ENCODE measurements at regions of chr9 and their contacts with region 1.

Region 1: DNA sequence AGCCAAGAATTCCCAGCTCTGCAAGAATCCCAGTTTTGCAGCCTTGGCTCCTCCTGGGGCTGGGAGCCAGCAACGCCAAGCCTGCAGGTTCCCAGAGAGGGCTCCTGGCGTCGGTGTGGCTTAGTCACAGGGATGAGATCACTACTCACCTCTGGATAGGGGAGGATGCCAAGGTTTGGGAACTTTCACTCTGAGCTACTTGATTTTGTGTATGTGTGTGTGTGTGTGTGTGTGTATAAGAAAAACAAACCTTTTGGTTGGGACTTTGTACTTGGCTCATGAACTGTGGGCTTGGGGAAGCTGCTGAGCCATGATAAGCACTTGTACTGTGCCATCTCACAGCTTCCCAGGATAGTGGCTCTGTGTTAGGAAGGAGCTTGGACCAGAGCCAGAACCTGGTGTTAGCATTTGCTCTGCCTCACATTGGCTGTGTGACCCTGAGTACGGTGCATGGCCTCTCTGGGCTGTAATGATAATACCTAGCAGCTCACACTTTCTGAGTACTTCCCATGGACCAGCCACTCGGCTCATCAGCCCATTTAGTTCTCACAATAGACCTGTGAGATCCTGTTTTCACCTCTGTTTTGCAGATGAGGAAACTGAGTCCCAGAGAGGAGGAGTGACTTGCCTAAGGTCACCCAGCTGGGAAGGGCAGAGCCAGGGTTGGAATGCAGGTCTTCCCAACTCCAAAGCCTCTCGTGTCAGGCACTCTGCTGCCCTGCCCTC is 41.4 kb upstream of the DAB2IP start:
- DNase-seq: no peak
- H3K4me3 ChIP-seq: no peak overlapping the region
- H3K27ac ChIP-seq: no peak overlapping the region
- H3K4me1 ChIP-seq: peaks cover 0 to 10% (median 5%) of the 10 kb centered on the region in 4 experiments; a peak in 5 of 7 replicates
- H3K27me3 ChIP-seq: no peaks in the 10 kb centered on the region
- CTCF ChIP-seq: no peak
- EP300 ChIP-seq: no peak
- POLR2A ChIP-seq: no peak
- RAD21 ChIP-seq: no peak

Region 2: DNA sequence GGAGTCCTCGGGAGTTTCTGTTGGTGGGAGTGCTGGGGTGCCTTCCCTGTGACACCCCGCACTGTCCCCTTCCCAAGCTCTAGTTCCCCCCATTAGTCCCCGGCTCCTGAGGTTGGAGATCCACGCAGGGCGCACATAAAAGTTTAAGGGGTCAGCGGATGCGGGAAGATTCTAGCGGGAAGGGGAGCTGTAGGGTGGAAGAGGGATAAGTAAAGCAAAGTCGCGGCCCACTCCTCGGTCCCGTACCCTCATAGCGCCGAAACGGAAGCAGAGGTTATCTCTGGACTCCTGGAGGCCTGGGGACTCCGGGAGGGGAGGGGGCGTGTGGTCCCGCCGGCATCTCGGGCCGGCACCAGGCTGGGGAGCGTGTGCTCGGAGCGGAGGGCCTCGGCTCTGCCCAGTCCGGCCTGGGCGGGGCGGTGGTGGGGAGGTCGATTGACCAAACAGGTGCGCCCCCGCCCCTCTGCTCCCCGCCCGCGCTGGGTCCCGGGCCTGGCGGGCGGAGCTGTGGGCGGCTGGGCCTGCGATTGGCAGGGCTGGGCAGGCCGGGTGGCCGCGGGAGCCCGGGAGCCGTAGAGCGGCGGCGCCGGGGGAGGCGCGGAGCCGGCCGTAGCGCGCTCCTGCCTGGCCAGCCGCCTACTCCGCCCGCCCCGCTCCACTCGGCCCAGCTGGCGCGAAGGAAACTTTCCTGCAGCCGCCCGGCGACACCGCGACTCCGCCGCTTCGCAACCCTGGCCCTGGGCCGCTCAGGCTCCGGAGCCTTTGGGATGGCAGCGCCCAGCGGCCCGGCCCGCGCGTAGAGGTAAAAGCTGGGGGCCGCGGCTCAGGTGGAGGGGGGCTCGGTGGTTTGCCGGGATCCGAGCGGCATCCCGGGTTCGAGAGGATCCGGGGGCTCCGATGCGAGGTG is 10.8 kb before region 1 on chr9:
- CTCF ChIA-PET with region 1: interaction called, 49 read pairs
- POLR2A ChIA-PET with region 1: interaction called, 26 read pairs
- DNase-seq: peak; percentile 68 to 90
- H3K4me3 ChIP-seq: peak overlapping the region; percentile 69 to 93 (median 72)
- H3K27ac ChIP-seq: no peak overlapping the region
- H3K4me1 ChIP-seq: peaks cover 3 to 21% (median 8%) of the 10 kb centered on the region in 4 experiments
- H3K27me3 ChIP-seq: peaks cover 0 to 21% (median 14%) of the 10 kb centered on the region in 4 experiments; a peak in 6 of 7 replicates
- CTCF ChIP-seq: no peak
- EP300 ChIP-seq: no peak
- POLR2A ChIP-seq: peak in 1 of 2 experiments; percentile 42; a peak in 1 of 3 replicates
- RAD21 ChIP-seq: no peak

Region 3: DNA sequence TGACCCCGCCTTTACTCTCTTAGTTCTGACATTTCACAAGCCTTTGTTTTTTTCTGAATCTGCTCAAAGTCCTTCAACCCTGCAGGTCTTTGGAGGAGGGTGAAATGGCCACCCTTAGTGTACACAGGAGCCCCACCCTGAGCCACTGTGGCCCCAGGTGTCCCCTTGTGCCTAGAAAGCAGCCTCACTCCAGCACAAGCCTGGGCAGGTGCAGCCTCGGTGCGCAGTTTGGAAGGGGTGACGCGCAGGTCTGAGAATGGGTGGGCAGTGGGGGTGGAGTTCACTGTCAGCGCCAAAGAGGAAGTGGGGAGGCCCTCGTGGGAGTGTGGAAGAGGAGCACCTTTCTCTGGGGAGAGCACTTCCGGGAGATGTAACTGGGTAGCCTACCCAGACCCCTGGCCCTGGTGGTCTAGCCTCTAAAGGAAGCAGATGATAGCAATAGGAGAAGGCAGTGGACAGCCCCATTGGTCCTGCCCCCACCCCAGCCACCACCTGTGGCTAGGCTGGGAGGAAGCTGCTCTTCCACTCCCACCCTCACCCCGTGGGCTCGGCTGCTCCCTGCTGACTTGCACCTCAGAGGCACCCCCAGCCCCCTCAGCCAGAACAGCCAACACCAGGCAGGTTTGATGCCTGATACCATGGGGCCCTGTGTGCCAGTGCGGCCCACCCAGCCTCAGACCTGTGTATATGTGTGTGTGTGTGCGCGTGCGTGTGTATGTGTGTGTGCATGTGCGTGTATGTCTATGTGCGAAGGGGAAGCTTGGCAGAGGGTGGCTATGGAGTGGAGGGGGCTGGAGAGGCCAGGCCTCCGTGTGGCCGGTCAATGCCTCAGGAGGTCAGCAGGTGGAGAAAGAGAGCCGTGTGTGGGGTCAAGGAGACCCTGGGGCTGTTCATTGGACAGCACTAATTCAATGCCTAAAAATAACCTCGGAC is 24.6 kb after region 1 on chr9:
- CTCF ChIA-PET with region 1: interaction called, 15 read pairs
- POLR2A ChIA-PET with region 1: no interaction called
- DNase-seq: peak in 1 of 2 experiments; percentile 80
- H3K4me3 ChIP-seq: no peak overlapping the region
- H3K27ac ChIP-seq: no peak overlapping the region
- H3K4me1 ChIP-seq: peaks cover 0 to 16% (median 11%) of the 10 kb centered on the region in 4 experiments; a peak in 5 of 7 replicates
- H3K27me3 ChIP-seq: no peaks in the 10 kb centered on the region
- CTCF ChIP-seq: peak; percentile 84 to 90 (median 84)
- EP300 ChIP-seq: no peak
- POLR2A ChIP-seq: no peak
- RAD21 ChIP-seq: peak; percentile 87 to 88